ENCODE measurements at regions of chrX and their contacts with region 1.

Region 1: DNA sequence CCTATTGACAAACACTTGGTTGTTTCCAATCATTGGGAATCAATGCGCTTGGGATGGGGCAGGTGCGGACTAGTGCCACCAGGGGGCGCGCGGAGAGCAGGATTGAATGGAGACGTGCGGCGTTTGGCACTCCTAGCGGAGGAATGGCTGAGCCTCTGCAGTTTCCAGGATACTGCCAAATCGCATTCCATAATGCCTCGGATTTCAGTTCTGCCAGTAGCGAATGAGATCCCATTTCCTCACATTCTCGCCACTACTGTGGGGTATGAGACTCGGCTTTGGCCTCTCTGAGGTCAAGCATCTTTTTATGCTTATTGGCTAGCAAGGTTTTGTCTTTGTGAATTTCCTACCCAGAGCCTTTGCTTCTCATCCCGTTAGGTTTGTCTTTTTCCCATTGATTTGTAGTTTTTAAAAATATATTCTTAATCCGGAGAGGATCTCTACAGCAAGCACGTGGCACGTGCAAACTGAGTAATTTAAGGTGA is 28.7 kb downstream of the CLDN34 start:
- DNase-seq: peak; percentile 63 to 74 (median 73)
- H3K4me3 ChIP-seq: no peak overlapping the region
- H3K4me3 Mint-ChIP-seq: no peak overlapping the region
- H3K27ac ChIP-seq: no peak overlapping the region
- H3K27ac Mint-ChIP-seq: peak overlapping the region in 1 of 7 donors; percentile 27
- H3K4me1 ChIP-seq: no peaks in the 10 kb centered on the region
- H3K4me1 Mint-ChIP-seq: peaks cover 0 to 6% (median 4%) of the 10 kb centered on the region in 4 donors
- H3K27me3 ChIP-seq: no peaks in the 10 kb centered on the region
- H3K27me3 Mint-ChIP-seq: no peaks in the 10 kb centered on the region

Region 2: DNA sequence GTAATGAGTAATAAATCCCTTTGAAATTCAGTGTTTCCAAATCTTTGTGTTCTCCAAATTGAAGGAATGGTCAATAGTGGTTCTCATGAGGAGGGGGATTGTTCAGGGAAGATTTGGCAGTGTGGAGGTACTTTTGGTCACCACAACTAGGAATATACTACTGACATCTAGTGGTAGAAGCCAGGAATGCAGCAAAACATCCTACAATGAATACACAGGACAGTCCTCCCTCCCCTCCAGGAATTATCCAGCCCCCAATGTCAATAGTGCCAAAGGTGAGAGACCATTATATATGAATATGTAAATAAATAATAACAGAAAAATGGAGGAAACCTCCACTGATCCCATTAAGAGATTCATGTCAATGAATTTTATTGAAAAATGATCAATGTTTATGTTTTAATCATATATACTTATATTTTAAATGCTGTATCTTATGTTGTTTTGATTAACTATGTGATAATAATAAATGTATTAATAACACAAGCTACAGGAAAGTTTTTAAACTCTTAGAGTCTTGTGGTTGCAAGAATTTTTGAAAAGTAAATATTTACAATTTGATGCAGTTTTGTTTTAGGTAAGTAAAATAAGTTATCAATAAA is 1180.3 kb before region 1 on chrX:
- CTCF ChIA-PET with region 1: no interaction called
- POLR2A ChIA-PET with region 1: no interaction called
- intact Hi-C with region 1: loop called (anchors 10 kb)
- DNase-seq: peak in 4 of 5 donors; percentile 18 to 40 (median 32)
- H3K4me3 ChIP-seq: no peak overlapping the region
- H3K4me3 Mint-ChIP-seq: no peak overlapping the region
- H3K27ac ChIP-seq: no peak overlapping the region
- H3K27ac Mint-ChIP-seq: no peak overlapping the region
- H3K4me1 ChIP-seq: no peaks in the 10 kb centered on the region
- H3K4me1 Mint-ChIP-seq: no peaks in the 10 kb centered on the region
- H3K27me3 ChIP-seq: no peaks in the 10 kb centered on the region
- H3K27me3 Mint-ChIP-seq: peaks cover 0 to 2% of the 10 kb centered on the region in 2 donors

Region 3: GRCh38 chrX:9595131-9595530 is 400.8 kb before region 1 on chrX:
- CTCF ChIA-PET with region 1: no interaction called
- POLR2A ChIA-PET with region 1: no interaction called
- intact Hi-C with region 1: no loop called
- DNase-seq: no peak
- H3K4me3 ChIP-seq: no peak overlapping the region
- H3K4me3 Mint-ChIP-seq: no peak overlapping the region
- H3K27ac ChIP-seq: no peak overlapping the region
- H3K27ac Mint-ChIP-seq: no peak overlapping the region
- H3K4me1 ChIP-seq: no peaks in the 10 kb centered on the region
- H3K4me1 Mint-ChIP-seq: peaks cover 0 to 6% (median 2%) of the 10 kb centered on the region in 4 donors
- H3K27me3 ChIP-seq: no peaks in the 10 kb centered on the region
- H3K27me3 Mint-ChIP-seq: no peaks in the 10 kb centered on the region

Region 4: GRCh38 chrX:9873952-9874351 is 121.9 kb before region 1 on chrX:
- CTCF ChIA-PET with region 1: interaction called, 3 read pairs
- POLR2A ChIA-PET with region 1: no interaction called
- intact Hi-C with region 1: loop called (anchors 2 kb)
- DNase-seq: peak; percentile 16 to 38 (median 28)
- H3K4me3 ChIP-seq: no peak overlapping the region
- H3K4me3 Mint-ChIP-seq: peak overlapping the region in 1 of 8 donors; percentile 20
- H3K27ac ChIP-seq: no peak overlapping the region
- H3K27ac Mint-ChIP-seq: no peak overlapping the region
- H3K4me1 ChIP-seq: no peaks in the 10 kb centered on the region
- H3K4me1 Mint-ChIP-seq: peaks cover 3 to 16% (median 11%) of the 10 kb centered on the region in 4 donors
- H3K27me3 ChIP-seq: no peaks in the 10 kb centered on the region
- H3K27me3 Mint-ChIP-seq: peaks cover 6 to 7% of the 10 kb centered on the region in 2 donors

Region 5: GRCh38 chrX:10077425-10078188 is 81.7 kb after region 1 on chrX:
- CTCF ChIA-PET with region 1: interaction called, 10 read pairs
- POLR2A ChIA-PET with region 1: no interaction called
- intact Hi-C with region 1: loop called (anchors 5 kb)
- DNase-seq: peak in 4 of 5 donors; percentile 2 to 41 (median 16)
- H3K4me3 ChIP-seq: no peak overlapping the region
- H3K4me3 Mint-ChIP-seq: no peak overlapping the region
- H3K27ac ChIP-seq: no peak overlapping the region
- H3K27ac Mint-ChIP-seq: peak overlapping the region in 1 of 7 donors; percentile 19
- H3K4me1 ChIP-seq: peaks cover 14% of the 10 kb centered on the region
- H3K4me1 Mint-ChIP-seq: peaks cover 1 to 11% (median 4%) of the 10 kb centered on the region in 4 donors
- H3K27me3 ChIP-seq: no peaks in the 10 kb centered on the region
- H3K27me3 Mint-ChIP-seq: no peaks in the 10 kb centered on the region

Measured in CD4-positive, alpha-beta memory T cell (primary cell).